ENCODE measurements at regions of chr6 and their contacts with region 1.

Region 1: GRCh38 chr6:4018172-4018905 is 60.6 kb downstream of the FAM217A start:
- DNase-seq: peak; percentile 97
- H3K4me3 Mint-ChIP-seq: peak overlapping the region; percentile 82
- H3K27ac Mint-ChIP-seq: peak overlapping the region; percentile 92
- H3K4me1 Mint-ChIP-seq: peaks cover 57% of the 10 kb centered on the region
- H3K27me3 Mint-ChIP-seq: no peaks in the 10 kb centered on the region

Region 2: GRCh38 chr6:3068329-3069214 is 949.8 kb before region 1 on chr6 and contains the start of gene RIPK1:
- CTCF ChIA-PET with region 1: no interaction called
- intact Hi-C with region 1: loop called (anchors 5 kb)
- DNase-seq: peak; percentile 95
- H3K4me3 Mint-ChIP-seq: peak within 1 kb of the TSS; percentile 92
- H3K27ac Mint-ChIP-seq: peak within 1 kb of the TSS; percentile 97
- H3K4me1 Mint-ChIP-seq: peaks cover 49% of the 10 kb centered on the region
- H3K27me3 Mint-ChIP-seq: no peaks in the 10 kb centered on the region
- total RNA-seq, gene RIPK1: 8.8 to 10.1 TPM

Region 3: DNA sequence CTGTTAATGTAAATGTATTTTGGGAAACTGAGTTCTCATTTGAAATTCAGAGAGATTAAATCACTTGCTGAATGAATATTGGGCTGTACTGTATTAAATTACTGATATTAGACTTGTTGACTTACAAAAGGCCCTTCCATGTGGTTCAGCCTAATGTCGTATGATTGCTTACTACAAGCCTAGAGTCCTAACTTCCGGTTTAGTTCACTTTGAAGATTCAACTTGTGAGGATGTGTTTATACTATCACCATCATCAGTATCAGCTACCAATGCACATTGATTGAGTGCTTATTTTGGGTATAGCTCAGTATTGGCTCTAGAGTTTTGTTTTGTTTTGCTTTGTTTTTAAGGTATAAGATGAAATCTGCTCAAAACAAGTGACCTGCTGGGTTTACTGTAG is 12.3 kb after region 1 on chr6:
- CTCF ChIA-PET with region 1: interaction called, 3 read pairs
- intact Hi-C with region 1: loop called (anchors 1 kb)
- DNase-seq: no peak
- H3K4me3 Mint-ChIP-seq: no peak overlapping the region
- H3K27ac Mint-ChIP-seq: peak overlapping the region; percentile 31
- H3K4me1 Mint-ChIP-seq: peaks cover 73% of the 10 kb centered on the region
- H3K27me3 Mint-ChIP-seq: no peaks in the 10 kb centered on the region

Region 4: DNA sequence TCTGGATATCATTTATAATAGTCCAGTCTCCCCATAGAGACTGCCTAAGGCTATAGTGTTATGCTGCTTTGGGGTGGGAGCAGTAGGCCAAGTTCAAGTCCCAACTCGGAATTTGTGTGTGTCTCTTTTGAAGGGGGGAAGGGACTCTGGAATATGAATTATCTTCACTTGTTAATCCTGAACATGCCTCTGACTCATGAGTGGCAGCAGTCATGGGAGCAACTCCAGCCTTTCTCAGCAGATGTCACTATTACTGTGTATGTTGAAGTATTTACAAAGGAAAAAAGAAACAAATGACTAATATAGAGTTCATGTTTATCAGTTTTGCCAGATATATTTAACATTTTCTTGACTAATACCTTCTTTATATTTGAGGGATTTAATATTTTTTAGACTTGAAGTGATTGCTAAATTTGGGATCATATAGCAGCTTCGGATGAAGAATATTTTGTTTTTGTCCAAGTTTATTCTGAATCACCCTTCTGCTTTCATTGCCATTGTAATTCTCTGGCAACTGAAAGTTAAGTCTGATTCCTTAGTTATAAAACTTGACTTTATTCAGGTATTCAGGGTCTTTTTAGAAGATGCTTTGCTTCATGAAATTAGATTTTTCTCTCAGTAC is 37.2 kb after region 1 on chr6:
- CTCF ChIA-PET with region 1: interaction called, 14 read pairs
- intact Hi-C with region 1: loop called (anchors 1 kb)
- DNase-seq: peak; percentile 23
- H3K4me3 Mint-ChIP-seq: no peak overlapping the region
- H3K27ac Mint-ChIP-seq: peak overlapping the region; percentile 50
- H3K4me1 Mint-ChIP-seq: peaks cover 21% of the 10 kb centered on the region
- H3K27me3 Mint-ChIP-seq: no peaks in the 10 kb centered on the region

Region 5: GRCh38 chr6:4637691-4638433 is 619.5 kb after region 1 on chr6:
- CTCF ChIA-PET with region 1: no interaction called
- intact Hi-C with region 1: loop called (anchors 5 kb)
- DNase-seq: peak; percentile 67
- H3K4me3 Mint-ChIP-seq: no peak overlapping the region
- H3K27ac Mint-ChIP-seq: no peak overlapping the region
- H3K4me1 Mint-ChIP-seq: peaks cover 15% of the 10 kb centered on the region
- H3K27me3 Mint-ChIP-seq: peaks cover 29% of the 10 kb centered on the region

Measured in activated naive CD4-positive, alpha-beta T cell treated with anti-CD3 and anti-CD28 coated beads for 36 hours (primary cell).